Activated naive CD4-positive, alpha-beta T cell treated with anti-CD3 and anti-CD28 coated beads for 36 hours (primary cell): ENCODE measurements at regions of chr14 and their contacts with region 1.

Region 1: GRCh38 chr14:52552063-52552988 is at the starts of genes GPR137C and TXNDC16:
- DNase-seq: peak; percentile 100
- H3K4me3 Mint-ChIP-seq: peak within 1 kb of the TSS; percentile 88
- H3K27ac Mint-ChIP-seq: peak within 1 kb of the TSS; percentile 77
- H3K4me1 Mint-ChIP-seq: peaks cover 15% of the 10 kb centered on the region
- H3K27me3 Mint-ChIP-seq: no peaks in the 10 kb centered on the region
- total RNA-seq, gene GPR137C: 0.07 TPM in 1 of 2 experiments, not detected in the other
- total RNA-seq, gene TXNDC16: 4.5 to 4.6 TPM

Region 2: GRCh38 chr14:51989293-51990234 is 562.8 kb before region 1 on chr14 and contains the start of gene RTRAF:
- CTCF ChIA-PET with region 1: no interaction called
- intact Hi-C with region 1: loop called (anchors 10 kb)
- DNase-seq: peak; percentile 93
- H3K4me3 Mint-ChIP-seq: peak within 1 kb of the TSS; percentile 89
- H3K27ac Mint-ChIP-seq: peak within 1 kb of the TSS; percentile 85
- H3K4me1 Mint-ChIP-seq: peaks cover 37% of the 10 kb centered on the region
- H3K27me3 Mint-ChIP-seq: no peaks in the 10 kb centered on the region
- total RNA-seq, gene RTRAF: 255 to 275 TPM

Region 3: DNA sequence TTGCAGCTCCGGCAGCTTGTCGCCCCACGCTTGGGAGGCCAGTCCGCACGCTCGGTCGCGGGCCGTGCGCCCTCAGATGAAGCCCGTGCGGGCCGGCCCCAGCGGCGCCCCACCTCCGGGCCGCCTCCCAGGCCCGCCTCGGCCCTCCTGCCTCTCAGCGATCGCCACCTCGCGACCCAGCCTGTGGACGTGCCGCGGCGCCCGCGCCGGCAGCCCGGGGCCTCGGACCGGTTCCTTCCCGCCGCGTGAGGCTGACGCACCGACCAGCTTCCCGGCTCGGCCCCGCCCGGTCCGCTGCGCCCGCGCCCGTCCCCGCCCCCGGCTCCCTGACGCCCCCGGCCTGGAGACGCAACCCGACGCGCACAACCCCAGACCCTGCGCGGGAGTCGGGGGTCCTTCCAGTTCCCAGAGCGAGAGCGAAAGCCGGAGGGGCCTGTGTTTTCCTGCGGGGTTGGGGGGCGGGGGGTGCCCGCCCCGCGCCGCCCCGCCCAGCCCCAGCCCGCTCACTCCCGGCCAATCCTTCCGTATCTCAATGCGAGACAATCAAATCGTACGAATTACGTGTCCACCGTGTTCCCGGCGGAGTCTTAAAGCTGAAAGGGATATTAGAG is 143.3 kb after region 1 on chr14 and contains the start of gene ERO1A:
- CTCF ChIA-PET with region 1: no interaction called
- intact Hi-C with region 1: loop called (anchors 1 kb)
- DNase-seq: peak; percentile 72
- H3K4me3 Mint-ChIP-seq: peak within 1 kb of the TSS; percentile 99
- H3K27ac Mint-ChIP-seq: peak within 1 kb of the TSS; percentile 99
- H3K4me1 Mint-ChIP-seq: peaks cover 33% of the 10 kb centered on the region
- H3K27me3 Mint-ChIP-seq: no peaks in the 10 kb centered on the region
- total RNA-seq, gene ERO1A: 87.4 to 90.4 TPM

Region 4: DNA sequence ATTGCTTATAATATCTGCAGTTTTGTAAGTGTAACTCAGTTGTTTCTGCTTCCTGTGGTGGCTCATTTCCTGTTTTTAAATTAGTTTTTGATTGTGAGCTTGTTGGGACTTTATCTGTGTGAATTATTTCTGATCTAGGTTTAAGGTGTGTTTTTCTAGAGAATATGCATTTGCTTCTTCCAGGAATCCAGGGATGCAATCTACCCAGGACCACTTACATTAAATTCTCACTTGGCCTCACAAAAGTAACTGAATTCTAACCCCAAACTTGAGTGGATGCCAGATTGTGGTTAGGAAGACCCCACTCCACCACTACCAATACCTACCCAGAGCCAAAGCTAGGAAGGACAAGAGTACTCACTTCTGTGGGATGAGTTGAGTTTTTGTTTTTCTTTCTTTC is 189.5 kb after region 1 on chr14:
- CTCF ChIA-PET with region 1: no interaction called
- intact Hi-C with region 1: loop called (anchors 1 kb)
- DNase-seq: no peak
- H3K4me3 Mint-ChIP-seq: peak overlapping the region; percentile 68
- H3K27ac Mint-ChIP-seq: peak overlapping the region; percentile 95
- H3K4me1 Mint-ChIP-seq: peaks cover 63% of the 10 kb centered on the region
- H3K27me3 Mint-ChIP-seq: no peaks in the 10 kb centered on the region

Region 5: GRCh38 chr14:52776816-52777215 is 224.5 kb after region 1 on chr14:
- CTCF ChIA-PET with region 1: no interaction called
- intact Hi-C with region 1: no loop called
- DNase-seq: no peak
- H3K4me3 Mint-ChIP-seq: no peak overlapping the region
- H3K27ac Mint-ChIP-seq: no peak overlapping the region
- H3K4me1 Mint-ChIP-seq: no peaks in the 10 kb centered on the region
- H3K27me3 Mint-ChIP-seq: no peaks in the 10 kb centered on the region

Region 6: GRCh38 chr14:52950898-52951689 is 398.8 kb after region 1 on chr14 and contains the start of gene FERMT2:
- CTCF ChIA-PET with region 1: no interaction called
- intact Hi-C with region 1: loop called (anchors 5 kb)
- DNase-seq: peak; percentile 25
- H3K4me3 Mint-ChIP-seq: peak within 1 kb of the TSS; percentile 83
- H3K27ac Mint-ChIP-seq: no peak within 1 kb of the TSS
- H3K4me1 Mint-ChIP-seq: peaks cover 31% of the 10 kb centered on the region
- H3K27me3 Mint-ChIP-seq: peaks cover 49% of the 10 kb centered on the region
- total RNA-seq, gene FERMT2: 2.8 to 3.0 TPM

Region 7: GRCh38 chr14:53152890-53153701 is 600.8 kb after region 1 on chr14 and contains the start of gene DDHD1:
- CTCF ChIA-PET with region 1: no interaction called
- intact Hi-C with region 1: loop called (anchors 2 kb)
- DNase-seq: peak; percentile 82
- H3K4me3 Mint-ChIP-seq: peak within 1 kb of the TSS; percentile 100
- H3K27ac Mint-ChIP-seq: peak within 1 kb of the TSS; percentile 95
- H3K4me1 Mint-ChIP-seq: peaks cover 36% of the 10 kb centered on the region
- H3K27me3 Mint-ChIP-seq: no peaks in the 10 kb centered on the region
- total RNA-seq, gene DDHD1: 20.1 to 20.4 TPM